MCF 10A (cell line): ENCODE measurements at regions of chr6 and their contacts with region 1.

Region 1: GRCh38 chr6:99822741-99823512 is 171.1 kb downstream of the MCHR2 start:
- DNase-seq: peak; percentile 81
- H3K4me3 Mint-ChIP-seq: peak overlapping the region; percentile 73
- H3K27ac Mint-ChIP-seq: no peak overlapping the region
- H3K4me1 Mint-ChIP-seq: peaks cover 11% of the 10 kb centered on the region
- H3K27me3 Mint-ChIP-seq: no peaks in the 10 kb centered on the region
- CTCF ChIP-seq: peak; percentile 66

Region 2: GRCh38 chr6:99467509-99468106 is 355.3 kb before region 1 on chr6:
- CTCF ChIA-PET with region 1: interaction called, 6 read pairs
- POLR2A ChIA-PET with region 1: no interaction called
- intact Hi-C with region 1: loop called (anchors 2 kb)
- DNase-seq: peak; percentile 41
- H3K4me3 Mint-ChIP-seq: no peak overlapping the region
- H3K27ac Mint-ChIP-seq: no peak overlapping the region
- H3K4me1 Mint-ChIP-seq: peaks cover 5% of the 10 kb centered on the region
- H3K27me3 Mint-ChIP-seq: no peaks in the 10 kb centered on the region
- CTCF ChIP-seq: peak; percentile 70

Region 3: DNA sequence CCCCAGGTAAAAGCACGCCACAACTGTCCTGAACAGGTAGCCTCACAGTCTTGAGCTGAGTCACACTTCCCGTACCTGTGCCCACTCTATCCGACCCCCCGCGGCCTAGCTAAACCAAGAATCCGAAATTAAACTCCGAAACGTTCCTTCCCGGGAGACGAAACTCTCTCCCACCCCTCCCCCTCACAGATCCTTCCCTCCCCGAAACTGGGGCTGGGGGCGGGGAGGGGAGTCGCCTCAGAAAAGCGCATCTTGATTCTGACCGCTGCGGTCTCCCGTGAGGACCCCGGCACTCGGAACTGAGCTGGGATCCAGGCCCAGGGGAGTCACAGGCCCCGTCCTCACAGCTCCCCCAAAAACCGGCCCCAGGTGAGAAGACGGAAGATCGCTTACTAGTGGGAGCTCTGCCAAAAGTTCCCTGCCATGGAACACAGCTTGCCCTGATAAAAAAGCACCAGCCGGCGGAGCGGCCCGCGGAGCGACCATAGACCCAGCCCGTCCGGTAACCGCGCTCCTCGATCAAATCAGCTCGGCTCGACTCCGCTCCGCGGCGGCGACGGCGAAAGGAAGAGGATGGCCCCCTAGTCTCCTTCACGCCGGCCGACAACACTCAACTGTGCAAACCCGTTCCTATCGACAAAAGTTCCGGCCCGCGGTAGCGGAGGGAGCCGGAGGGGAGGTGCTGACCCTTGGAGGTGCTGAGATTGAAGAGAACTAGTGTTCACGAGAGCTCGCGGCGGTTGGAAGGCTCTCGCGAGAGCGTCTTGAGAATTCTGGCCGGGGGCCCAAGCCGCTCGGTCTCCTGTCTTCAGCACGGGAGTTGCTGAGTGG is 254.6 kb before region 1 on chr6 and contains the start of gene CCNC:
- CTCF ChIA-PET with region 1: interaction called, 3 read pairs
- POLR2A ChIA-PET with region 1: interaction called, 12 read pairs
- intact Hi-C with region 1: no loop called
- DNase-seq: peak; percentile 97
- H3K4me3 Mint-ChIP-seq: peak within 1 kb of the TSS; percentile 100
- H3K27ac Mint-ChIP-seq: peak within 1 kb of the TSS; percentile 100
- H3K4me1 Mint-ChIP-seq: peaks cover 23% of the 10 kb centered on the region
- H3K27me3 Mint-ChIP-seq: no peaks in the 10 kb centered on the region
- CTCF ChIP-seq: no peak
- total RNA-seq, gene CCNC: 54.0 and 76.5 TPM in 2 replicates

Region 4: DNA sequence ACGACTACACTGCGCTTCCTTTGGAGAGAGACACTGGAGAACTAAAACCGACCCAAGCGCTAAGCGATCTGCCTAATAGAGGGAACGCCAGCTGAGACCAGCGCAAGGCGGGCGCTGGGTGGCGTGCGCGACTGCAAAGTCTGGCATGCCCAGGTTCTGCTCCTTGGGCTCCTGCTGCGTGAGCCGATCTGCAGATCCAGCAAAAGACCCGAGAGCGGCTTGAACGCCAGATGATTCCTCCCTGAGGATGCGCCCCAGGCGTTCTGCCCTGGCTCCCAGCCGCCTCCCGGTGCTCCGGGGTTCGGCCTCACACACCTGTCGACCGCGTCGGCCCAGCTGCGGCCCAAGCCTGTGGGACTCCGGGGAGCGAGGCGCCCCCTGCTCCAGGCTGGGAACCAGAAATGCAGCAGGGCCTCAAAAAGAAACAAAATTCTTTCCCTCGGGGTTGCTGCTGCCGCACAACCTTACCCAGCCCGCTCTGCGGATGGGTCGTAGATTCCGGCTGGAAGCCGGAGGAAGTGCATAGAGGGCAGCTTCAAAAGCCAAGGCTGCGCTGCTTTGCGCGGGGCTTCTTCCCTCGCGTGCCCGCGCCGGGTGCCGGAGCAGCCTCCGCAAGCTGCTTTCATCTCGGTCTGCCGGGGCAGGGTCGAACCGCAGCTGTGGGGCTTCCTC is 234.2 kb before region 1 on chr6:
- CTCF ChIA-PET with region 1: interaction called, 12 read pairs
- POLR2A ChIA-PET with region 1: no interaction called
- intact Hi-C with region 1: loop called (anchors 2 kb)
- DNase-seq: peak; percentile 58
- H3K4me3 Mint-ChIP-seq: peak overlapping the region; percentile 73
- H3K27ac Mint-ChIP-seq: no peak overlapping the region
- H3K4me1 Mint-ChIP-seq: peaks cover 5% of the 10 kb centered on the region
- H3K27me3 Mint-ChIP-seq: peaks cover 68% of the 10 kb centered on the region
- CTCF ChIP-seq: peak; percentile 31

Region 5: DNA sequence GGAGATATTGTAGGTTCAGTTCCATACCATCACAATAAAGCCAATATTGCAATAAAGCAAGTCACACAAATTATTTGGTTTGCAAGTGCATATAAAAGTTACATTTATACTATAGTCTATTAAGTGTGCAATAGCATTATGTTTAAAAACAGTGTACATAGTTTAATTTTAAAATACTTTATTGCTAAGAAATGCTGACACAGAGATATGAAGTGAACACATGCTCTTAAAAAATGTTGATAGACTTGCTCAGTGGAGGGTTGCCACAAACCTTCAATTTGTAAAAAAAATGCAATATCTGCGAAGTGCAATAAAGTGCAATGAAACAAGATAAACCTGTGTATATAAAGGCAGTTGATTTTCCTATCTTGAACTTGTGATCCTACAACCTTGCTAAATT is 54.8 kb before region 1 on chr6:
- CTCF ChIA-PET with region 1: interaction called, 10 read pairs
- POLR2A ChIA-PET with region 1: no interaction called
- intact Hi-C with region 1: no loop called
- DNase-seq: no peak
- H3K4me3 Mint-ChIP-seq: no peak overlapping the region
- H3K27ac Mint-ChIP-seq: no peak overlapping the region
- H3K4me1 Mint-ChIP-seq: no peaks in the 10 kb centered on the region
- H3K27me3 Mint-ChIP-seq: peaks cover 58% of the 10 kb centered on the region
- CTCF ChIP-seq: no peak

Region 6: GRCh38 chr6:99810942-99811620 is 11.8 kb before region 1 on chr6:
- CTCF ChIA-PET with region 1: interaction called, 14 read pairs
- POLR2A ChIA-PET with region 1: no interaction called
- intact Hi-C with region 1: no loop called
- DNase-seq: no peak
- H3K4me3 Mint-ChIP-seq: no peak overlapping the region
- H3K27ac Mint-ChIP-seq: no peak overlapping the region
- H3K4me1 Mint-ChIP-seq: peaks cover 6% of the 10 kb centered on the region
- H3K27me3 Mint-ChIP-seq: peaks cover 21% of the 10 kb centered on the region
- CTCF ChIP-seq: no peak

Region 7: GRCh38 chr6:99836471-99836870 is 13.5 kb after region 1 on chr6:
- CTCF ChIA-PET with region 1: interaction called, 11 read pairs
- POLR2A ChIA-PET with region 1: interaction called, 3 read pairs
- intact Hi-C with region 1: no loop called
- DNase-seq: peak; percentile 75
- H3K4me3 Mint-ChIP-seq: no peak overlapping the region
- H3K27ac Mint-ChIP-seq: peak overlapping the region; percentile 82
- H3K4me1 Mint-ChIP-seq: no peaks in the 10 kb centered on the region
- H3K27me3 Mint-ChIP-seq: no peaks in the 10 kb centered on the region
- CTCF ChIP-seq: no peak

Region 8: GRCh38 chr6:99882128-99882702 is 59.3 kb after region 1 on chr6:
- CTCF ChIA-PET with region 1: no interaction called
- POLR2A ChIA-PET with region 1: no interaction called
- intact Hi-C with region 1: no loop called
- DNase-seq: no peak
- H3K4me3 Mint-ChIP-seq: no peak overlapping the region
- H3K27ac Mint-ChIP-seq: no peak overlapping the region
- H3K4me1 Mint-ChIP-seq: no peaks in the 10 kb centered on the region
- H3K27me3 Mint-ChIP-seq: no peaks in the 10 kb centered on the region
- CTCF ChIP-seq: no peak

Region 9: GRCh38 chr6:100008857-100009256 is 185.9 kb after region 1 on chr6:
- CTCF ChIA-PET with region 1: no interaction called
- POLR2A ChIA-PET with region 1: no interaction called
- intact Hi-C with region 1: no loop called
- DNase-seq: no peak
- H3K4me3 Mint-ChIP-seq: no peak overlapping the region
- H3K27ac Mint-ChIP-seq: no peak overlapping the region
- H3K4me1 Mint-ChIP-seq: peaks cover 7% of the 10 kb centered on the region
- H3K27me3 Mint-ChIP-seq: no peaks in the 10 kb centered on the region
- CTCF ChIP-seq: no peak

Region 10: DNA sequence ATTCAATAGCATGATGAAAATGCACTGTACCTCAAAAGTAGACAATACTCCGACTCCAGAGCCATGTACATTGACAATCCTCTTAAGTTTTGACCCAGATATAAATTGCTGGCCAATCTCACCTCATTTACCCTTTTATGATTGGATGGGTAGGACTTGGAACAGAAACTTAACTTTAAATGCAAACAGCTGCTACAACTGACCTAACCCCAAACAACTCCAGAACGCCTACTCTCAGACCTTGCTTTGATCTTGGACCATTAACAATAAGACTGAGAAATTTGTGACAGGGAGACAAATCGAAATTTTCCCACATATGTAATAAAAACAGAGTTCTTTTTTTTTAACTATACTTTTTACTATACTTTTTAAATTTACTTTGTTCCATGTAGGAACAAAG is 371.6 kb after region 1 on chr6:
- CTCF ChIA-PET with region 1: no interaction called
- POLR2A ChIA-PET with region 1: no interaction called
- intact Hi-C with region 1: no loop called
- DNase-seq: no peak
- H3K4me3 Mint-ChIP-seq: no peak overlapping the region
- H3K27ac Mint-ChIP-seq: no peak overlapping the region
- H3K4me1 Mint-ChIP-seq: no peaks in the 10 kb centered on the region
- H3K27me3 Mint-ChIP-seq: no peaks in the 10 kb centered on the region
- CTCF ChIP-seq: no peak